AG04449 (cell line): ENCODE measurements at regions of chr6 and their contacts with region 1.

Region 1: GRCh38 chr6:109187399-109188114 is 92.2 kb downstream of the CEP57L1 start:
- DNase-seq: no peak
- H3K4me3 ChIP-seq: no peak overlapping the region
- CTCF ChIP-seq: peak; percentile 79

Region 2: GRCh38 chr6:109202409-109203284 is 15.1 kb after region 1 on chr6:
- CTCF ChIA-PET with region 1: interaction called, 13 read pairs
- POLR2A ChIA-PET with region 1: no interaction called
- DNase-seq: no peak
- H3K4me3 ChIP-seq: no peak overlapping the region
- CTCF ChIP-seq: no peak

Region 3: DNA sequence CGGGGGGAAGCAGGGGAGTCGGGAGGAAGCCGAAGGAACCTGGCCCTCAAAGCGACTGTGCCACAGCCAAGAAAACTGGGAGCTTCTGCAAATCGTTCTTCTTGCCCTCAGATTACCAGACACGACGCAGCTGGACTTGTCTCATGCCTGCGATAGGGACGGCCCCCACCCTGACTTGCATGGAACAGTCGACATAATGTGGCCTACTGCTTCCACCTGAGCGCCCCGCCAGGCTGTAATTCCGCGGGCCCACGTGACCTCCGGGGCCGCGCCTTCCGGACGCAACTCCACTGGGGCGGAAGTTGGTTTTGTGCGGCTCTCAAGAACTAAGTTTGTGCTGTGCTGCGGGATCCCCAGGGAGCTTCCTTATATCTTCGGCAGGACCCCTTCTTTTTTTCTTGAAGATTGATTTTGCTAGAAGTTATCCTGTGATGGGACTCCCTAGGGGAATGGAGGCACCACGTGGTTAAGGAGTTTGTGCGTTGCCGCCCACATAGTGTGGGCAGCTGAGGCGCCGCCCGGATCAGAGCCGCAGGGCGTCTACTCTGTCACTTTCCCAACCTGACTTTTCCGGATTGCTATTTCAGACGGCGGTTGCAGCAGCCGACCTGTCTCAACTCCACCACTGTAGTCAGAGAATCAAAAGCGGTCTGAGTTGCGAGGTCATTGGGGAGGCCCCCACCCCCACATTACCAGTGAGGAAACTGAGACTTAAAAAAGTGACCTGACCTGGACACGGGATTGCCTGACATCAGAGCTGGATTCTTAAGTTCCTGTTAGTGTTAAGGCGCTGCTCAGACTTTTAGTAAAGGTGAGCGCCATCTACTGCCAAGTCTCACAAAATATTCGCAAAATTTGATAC is 195.2 kb after region 1 on chr6:
- CTCF ChIA-PET with region 1: interaction called, 137 read pairs
- POLR2A ChIA-PET with region 1: interaction called, 6 read pairs
- DNase-seq: peak; percentile 70
- H3K4me3 ChIP-seq: peak overlapping the region; percentile 93
- CTCF ChIP-seq: peak; percentile 9

Region 4: DNA sequence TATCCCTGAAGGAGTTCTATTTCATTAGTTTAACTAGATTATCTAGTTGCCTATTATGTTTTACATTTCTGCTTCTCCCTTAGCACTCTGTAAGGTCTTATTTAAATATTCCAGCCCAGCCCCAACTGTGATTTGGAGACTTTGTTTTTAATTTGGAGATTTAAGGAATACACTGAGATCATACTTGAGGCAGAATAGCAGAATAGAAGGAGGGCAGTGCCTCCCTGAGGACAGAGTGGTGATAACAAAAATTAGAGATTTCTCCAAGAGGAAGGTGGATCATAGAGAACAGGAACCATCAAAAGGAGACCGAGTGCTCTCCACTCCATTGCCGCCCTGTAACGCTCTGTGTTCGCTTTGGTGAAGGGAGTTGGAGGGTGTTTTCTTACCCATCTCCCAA is 209.5 kb after region 1 on chr6:
- CTCF ChIA-PET with region 1: interaction called, 16 read pairs
- POLR2A ChIA-PET with region 1: no interaction called
- DNase-seq: no peak
- H3K4me3 ChIP-seq: no peak overlapping the region
- CTCF ChIP-seq: peak; percentile 18

Region 5: GRCh38 chr6:109440331-109441068 is 252.9 kb after region 1 on chr6 and contains the starts of genes PPIL6 and SMPD2:
- CTCF ChIA-PET with region 1: interaction called, 11 read pairs
- POLR2A ChIA-PET with region 1: interaction called, 3 read pairs
- DNase-seq: no peak
- H3K4me3 ChIP-seq: peak within 1 kb of the TSS; percentile 78
- CTCF ChIP-seq: peak; percentile 54